GM12878 (cell line): ENCODE measurements at regions of chr2 and their contacts with region 1.

Region 1: GRCh38 chr2:199955339-199956261 is at the starts of genes MAIP1 and TYW5:
- DNase-seq: peak; percentile 33
- ATAC-seq: peak; percentile 88
- H3K4me3 ChIP-seq: peak within 1 kb of the TSS; percentile 98
- H3K27ac ChIP-seq: peak within 1 kb of the TSS; percentile 98
- H3K4me1 ChIP-seq: peaks cover 9% of the 10 kb centered on the region
- H3K27me3 ChIP-seq: no peaks in the 10 kb centered on the region
- CTCF ChIP-seq: peak in 2 of 3 experiments; percentile 12 to 21; a peak in 2 of 6 replicates
- EP300 ChIP-seq: peak in 1 of 2 experiments; percentile 18; a peak in 1 of 4 replicates
- POLR2A ChIP-seq: peak; percentile 94
- RAD21 ChIP-seq: no peak
- polyA plus RNA-seq, gene MAIP1: 5.4 to 15.9 TPM
- polyA plus RNA-seq, gene TYW5: 4.6 to 5.4 TPM

Region 2: DNA sequence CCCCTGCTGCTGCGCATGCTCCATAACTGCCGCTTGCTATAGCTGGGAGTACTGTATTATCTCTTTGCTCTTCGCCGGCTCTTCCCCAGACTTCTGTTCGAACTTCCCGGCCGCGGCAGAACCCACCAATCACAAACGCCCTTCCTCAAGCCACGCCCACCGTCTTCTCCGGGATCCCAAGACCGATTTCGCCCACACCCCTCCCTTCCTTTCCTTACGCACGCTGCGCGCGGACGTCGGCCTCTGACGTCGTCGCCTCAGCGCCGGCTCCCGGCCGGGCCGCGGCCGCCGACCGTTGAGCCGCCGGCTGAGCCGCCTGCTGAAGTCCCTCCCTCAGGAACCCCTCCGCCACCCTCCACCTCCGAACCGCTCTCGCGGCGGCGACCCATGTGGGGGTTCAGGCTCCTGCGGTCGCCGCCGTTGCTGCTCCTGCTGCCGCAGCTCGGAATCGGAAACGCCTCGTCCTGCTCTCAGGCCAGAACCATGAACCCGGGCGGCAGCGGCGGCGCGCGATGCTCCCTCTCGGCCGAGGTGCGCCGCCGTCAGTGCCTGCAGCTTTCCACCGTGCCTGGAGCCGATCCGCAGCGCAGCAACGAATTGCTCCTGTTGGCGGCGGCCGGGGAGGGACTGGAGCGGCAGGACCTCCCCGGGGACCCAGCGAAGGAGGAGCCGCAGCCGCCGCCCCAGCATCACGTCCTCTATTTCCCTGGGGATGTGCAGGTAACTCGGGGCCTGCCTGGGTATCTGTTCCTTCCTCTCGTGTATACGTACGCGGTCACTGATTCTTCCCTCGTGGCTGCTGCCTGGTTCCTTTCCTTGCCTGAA is 44.3 kb before region 1 on chr2 and contains the start of gene C2orf69:
- CTCF ChIA-PET with region 1: no interaction called
- POLR2A ChIA-PET with region 1: interaction called, 3 read pairs
- RAD21 ChIA-PET with region 1: no interaction called
- SMC1A ChIA-PET with region 1: interaction called, 3 read pairs
- in situ Hi-C with region 1: no loop called
- intact Hi-C with region 1: loop called (anchors 2 kb)
- DNase-seq: peak; percentile 93
- ATAC-seq: peak; percentile 91
- H3K4me3 ChIP-seq: peak within 1 kb of the TSS; percentile 95
- H3K27ac ChIP-seq: peak within 1 kb of the TSS; percentile 88
- H3K4me1 ChIP-seq: no peaks in the 10 kb centered on the region
- H3K27me3 ChIP-seq: no peaks in the 10 kb centered on the region
- CTCF ChIP-seq: no peak
- EP300 ChIP-seq: no peak
- POLR2A ChIP-seq: peak; percentile 90
- RAD21 ChIP-seq: no peak
- polyA plus RNA-seq, gene C2orf69: 6.3 to 7.9 TPM

Region 3: DNA sequence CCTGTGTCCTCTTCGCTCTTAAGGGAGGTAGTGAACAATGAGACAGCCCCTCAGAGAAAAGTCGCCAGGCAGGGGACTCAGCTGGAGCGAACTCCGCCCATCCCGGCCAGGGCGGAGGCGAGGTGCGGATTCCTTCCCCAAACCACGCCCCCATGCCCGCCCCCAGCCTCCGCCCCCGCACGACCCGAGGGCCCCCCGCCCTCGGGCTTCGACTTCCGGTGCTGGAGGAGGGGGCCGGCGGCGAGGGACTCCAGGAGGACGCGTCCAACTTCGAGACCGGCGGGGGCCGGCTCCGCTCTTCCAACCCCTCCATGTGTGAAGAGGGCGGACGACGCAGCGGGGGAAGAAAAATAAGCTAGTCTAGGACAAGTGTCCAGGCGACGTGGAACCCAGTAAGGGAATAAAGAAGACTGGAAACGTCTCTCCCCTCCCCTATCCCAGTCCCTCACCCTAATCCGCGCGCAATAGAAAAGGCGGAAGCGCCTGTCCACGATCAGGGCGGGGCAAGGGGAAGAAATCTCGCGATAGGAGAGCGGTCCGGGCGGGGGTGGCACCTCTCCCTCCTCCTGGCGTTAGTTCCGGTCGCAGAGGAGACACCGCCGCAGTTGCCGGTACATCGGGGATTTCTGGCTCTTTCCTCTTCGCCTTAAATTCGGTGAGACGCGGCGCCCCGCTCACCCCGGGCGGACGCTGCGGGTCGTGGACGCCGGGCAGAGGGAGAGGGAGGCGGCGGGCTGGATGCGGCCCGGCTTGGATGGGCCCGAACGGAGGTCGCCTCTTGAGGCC is 855.9 kb after region 1 on chr2 and contains the start of gene BZW1:
- CTCF ChIA-PET with region 1: no interaction called
- POLR2A ChIA-PET with region 1: no interaction called
- RAD21 ChIA-PET with region 1: no interaction called
- SMC1A ChIA-PET with region 1: no interaction called
- in situ Hi-C with region 1: no loop called
- intact Hi-C with region 1: loop called (anchors 10 kb)
- DNase-seq: peak; percentile 88
- ATAC-seq: peak; percentile 86
- H3K4me3 ChIP-seq: peak within 1 kb of the TSS; percentile 88
- H3K27ac ChIP-seq: peak within 1 kb of the TSS; percentile 100
- H3K4me1 ChIP-seq: peaks cover 19% of the 10 kb centered on the region
- H3K27me3 ChIP-seq: no peaks in the 10 kb centered on the region
- CTCF ChIP-seq: no peak
- EP300 ChIP-seq: 0 out of 4 replicates have a peak, but pooled peaks of 1 of the 2 experiments have one; percentile 5
- POLR2A ChIP-seq: peak; percentile 90
- RAD21 ChIP-seq: no peak
- polyA plus RNA-seq, gene BZW1: 200 to 317 TPM

Region 4: GRCh38 chr2:201130524-201131186 is 1175.1 kb after region 1 on chr2:
- CTCF ChIA-PET with region 1: no interaction called
- POLR2A ChIA-PET with region 1: no interaction called
- RAD21 ChIA-PET with region 1: no interaction called
- SMC1A ChIA-PET with region 1: no interaction called
- in situ Hi-C with region 1: no loop called
- intact Hi-C with region 1: loop called (anchors 10 kb)
- DNase-seq: no peak
- ATAC-seq: peak; percentile 7
- H3K4me3 ChIP-seq: peak overlapping the region; percentile 88
- H3K27ac ChIP-seq: peak overlapping the region; percentile 99
- H3K4me1 ChIP-seq: peaks cover 23% of the 10 kb centered on the region
- H3K27me3 ChIP-seq: no peaks in the 10 kb centered on the region
- CTCF ChIP-seq: no peak
- EP300 ChIP-seq: no peak; a peak in 1 of 4 replicates
- POLR2A ChIP-seq: no peak
- RAD21 ChIP-seq: no peak